ENCODE measurements at regions of chr2 and their contacts with region 1.

Region 1: DNA sequence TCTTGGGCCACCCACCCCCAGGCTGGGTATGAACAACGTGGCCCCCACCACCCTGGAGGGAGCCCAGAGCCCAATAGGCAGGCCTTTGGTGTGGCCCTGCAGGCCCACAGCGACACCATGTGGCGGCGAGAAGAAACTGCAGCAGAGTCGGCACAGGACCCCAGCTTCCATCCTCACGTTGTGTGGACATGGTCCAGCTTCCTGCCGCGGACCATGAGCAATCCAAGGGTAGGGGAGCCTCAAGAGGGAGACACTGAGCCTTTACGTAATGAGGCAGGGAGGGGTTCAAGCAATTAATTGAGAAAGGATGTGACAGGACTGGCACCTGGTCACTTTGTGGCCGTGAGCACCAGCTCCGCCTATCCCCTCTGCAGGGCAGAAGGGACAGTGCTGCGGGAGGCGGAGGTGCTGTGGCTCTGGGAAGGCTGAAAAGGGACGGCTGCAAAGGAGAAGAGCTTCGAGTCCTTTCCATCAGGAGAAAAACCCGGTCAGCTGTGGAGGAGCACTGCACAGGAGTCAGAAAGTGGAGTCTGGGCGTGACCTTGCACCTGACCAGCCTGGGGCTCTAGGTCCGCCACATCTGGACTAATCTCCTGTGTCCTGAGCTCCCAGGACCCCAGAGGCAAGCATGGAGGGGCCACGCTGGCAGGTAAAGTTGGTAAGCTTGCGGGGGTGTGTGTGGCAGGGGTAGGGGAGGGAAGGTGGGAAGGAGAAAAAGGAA is 44.8 kb downstream of the TMEM37 start:
- DNase-seq: peak; percentile 60
- ATAC-seq: peak; percentile 79
- H3K4me3 Mint-ChIP-seq: no peak overlapping the region
- H3K27ac Mint-ChIP-seq: no peak overlapping the region
- H3K4me1 Mint-ChIP-seq: no peaks in the 10 kb centered on the region
- H3K27me3 Mint-ChIP-seq: peaks cover 8% of the 10 kb centered on the region

Region 2: GRCh38 chr2:119234377-119235019 is 242.0 kb before region 1 on chr2:
- CTCF ChIA-PET with region 1: interaction called, 4 read pairs
- POLR2A ChIA-PET with region 1: no interaction called
- intact Hi-C with region 1: loop called in 1 of 2 experiments (anchors 10 kb)
- DNase-seq: peak; percentile 31
- ATAC-seq: no peak
- H3K4me3 Mint-ChIP-seq: no peak overlapping the region
- H3K27ac Mint-ChIP-seq: no peak overlapping the region
- H3K4me1 Mint-ChIP-seq: peaks cover 8% of the 10 kb centered on the region
- H3K27me3 Mint-ChIP-seq: no peaks in the 10 kb centered on the region

Region 3: GRCh38 chr2:119407430-119408220 is 68.8 kb before region 1 on chr2:
- CTCF ChIA-PET with region 1: interaction called, 43 read pairs
- POLR2A ChIA-PET with region 1: no interaction called
- intact Hi-C with region 1: loop called (anchors 1 kb)
- DNase-seq: peak; percentile 56
- ATAC-seq: peak; percentile 42
- H3K4me3 Mint-ChIP-seq: no peak overlapping the region
- H3K27ac Mint-ChIP-seq: no peak overlapping the region
- H3K4me1 Mint-ChIP-seq: no peaks in the 10 kb centered on the region
- H3K27me3 Mint-ChIP-seq: peaks cover 2% of the 10 kb centered on the region